Posterior vena cava (tissue), 2 donors: ENCODE measurements at regions of chr5 and their contacts with region 1.

Region 1: DNA sequence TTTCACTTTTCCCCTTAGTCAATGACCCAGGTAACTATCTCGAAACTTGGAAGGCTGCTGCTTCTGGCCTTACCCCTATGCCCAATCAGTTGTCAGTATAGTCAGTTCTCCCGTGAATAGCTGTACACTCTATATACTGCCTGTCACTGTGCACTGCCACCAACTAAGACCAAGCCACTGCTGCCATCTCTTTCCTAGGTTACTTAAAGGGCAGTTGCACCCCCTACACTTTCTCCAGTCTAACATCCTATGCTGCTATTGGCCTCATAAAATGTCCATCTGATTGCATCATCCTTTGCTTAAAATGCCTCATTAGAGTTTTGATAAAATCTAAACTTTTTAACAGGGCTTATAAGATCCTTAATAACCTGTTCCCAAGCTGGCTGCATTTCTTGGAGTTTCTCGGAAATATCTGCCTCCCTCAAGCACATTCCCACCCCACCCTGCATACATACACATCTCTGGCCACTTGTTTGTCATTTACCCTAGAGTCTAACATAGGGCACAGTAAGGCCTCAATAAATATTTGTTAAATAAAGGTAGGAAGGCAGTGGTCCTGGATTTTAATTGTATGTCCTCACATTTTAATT is 32.8 kb upstream of the TNFAIP8 start:
- DNase-seq: no peak

Region 2: DNA sequence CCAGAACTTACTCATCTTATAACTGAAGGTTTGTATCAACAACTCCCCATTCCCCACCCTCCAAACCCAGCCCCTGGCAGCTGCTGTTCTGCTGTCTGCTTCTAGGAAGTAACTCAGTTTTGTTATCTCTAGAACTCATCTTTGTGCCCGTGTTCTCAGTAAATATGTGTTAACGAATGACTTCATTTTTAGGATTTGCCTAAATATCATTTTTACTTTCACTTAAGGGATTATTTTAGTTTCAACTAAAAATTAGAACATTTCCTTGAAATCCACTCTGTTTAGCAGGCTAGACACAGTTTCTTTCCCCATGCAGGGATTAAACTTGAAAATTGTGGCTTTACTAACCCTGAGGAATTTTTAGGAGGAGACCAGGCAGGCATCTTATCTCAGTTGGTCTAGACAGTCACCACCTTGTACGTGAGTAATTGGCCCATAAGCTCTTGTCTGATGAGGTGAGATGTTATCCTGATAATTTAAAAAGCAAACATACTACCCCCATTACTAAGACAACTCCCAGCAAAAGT is 35.4 kb before region 1 on chr5:
- intact Hi-C with region 1: loop called in 1 of 2 experiments (anchors 2 kb)
- DNase-seq: no peak